Endothelial cell of umbilical vein (primary cell): ENCODE measurements at regions of chr2 and their contacts with region 1.

Region 1: GRCh38 chr2:202317080-202317857 is 51.7 kb downstream of the NOP58 start:
- DNase-seq: peak; percentile 99
- H3K4me3 ChIP-seq: peak overlapping the region in 1 of 3 experiments; percentile 14
- H3K27ac ChIP-seq: peak overlapping the region; percentile 83
- H3K4me1 ChIP-seq: peaks cover 29% of the 10 kb centered on the region
- H3K27me3 ChIP-seq: no peaks in the 10 kb centered on the region
- CTCF ChIP-seq: no peak
- POLR2A ChIP-seq: peak; percentile 36

Region 2: GRCh38 chr2:202278944-202279343 is 38.3 kb before region 1 on chr2:
- CTCF ChIA-PET with region 1: interaction called, 7 read pairs
- POLR2A ChIA-PET with region 1: no interaction called
- dilution Hi-C with region 1: no loop called
- intact Hi-C with region 1: loop called (anchors 1 kb)
- DNase-seq: peak; percentile 88
- H3K4me3 ChIP-seq: peak overlapping the region in 1 of 3 experiments; percentile 12
- H3K27ac ChIP-seq: peak overlapping the region; percentile 88
- H3K4me1 ChIP-seq: peaks cover 24% of the 10 kb centered on the region
- H3K27me3 ChIP-seq: no peaks in the 10 kb centered on the region
- CTCF ChIP-seq: peak; percentile 41 to 61
- POLR2A ChIP-seq: no peak

Region 3: GRCh38 chr2:202299712-202300111 is 17.6 kb before region 1 on chr2:
- CTCF ChIA-PET with region 1: interaction called, 9 read pairs
- POLR2A ChIA-PET with region 1: no interaction called
- dilution Hi-C with region 1: no loop called
- intact Hi-C with region 1: loop called (anchors 1 kb)
- DNase-seq: no peak
- H3K4me3 ChIP-seq: no peak overlapping the region
- H3K27ac ChIP-seq: no peak overlapping the region
- H3K4me1 ChIP-seq: peaks cover 7% of the 10 kb centered on the region
- H3K27me3 ChIP-seq: no peaks in the 10 kb centered on the region
- CTCF ChIP-seq: no peak
- POLR2A ChIP-seq: no peak

Region 4: GRCh38 chr2:202327858-202328257 is 10.6 kb after region 1 on chr2:
- CTCF ChIA-PET with region 1: interaction called, 11 read pairs
- POLR2A ChIA-PET with region 1: no interaction called
- dilution Hi-C with region 1: no loop called
- intact Hi-C with region 1: no loop called
- DNase-seq: peak; percentile 42
- H3K4me3 ChIP-seq: no peak overlapping the region
- H3K27ac ChIP-seq: no peak overlapping the region
- H3K4me1 ChIP-seq: peaks cover 9% of the 10 kb centered on the region
- H3K27me3 ChIP-seq: no peaks in the 10 kb centered on the region
- CTCF ChIP-seq: no peak
- POLR2A ChIP-seq: no peak

Region 5: DNA sequence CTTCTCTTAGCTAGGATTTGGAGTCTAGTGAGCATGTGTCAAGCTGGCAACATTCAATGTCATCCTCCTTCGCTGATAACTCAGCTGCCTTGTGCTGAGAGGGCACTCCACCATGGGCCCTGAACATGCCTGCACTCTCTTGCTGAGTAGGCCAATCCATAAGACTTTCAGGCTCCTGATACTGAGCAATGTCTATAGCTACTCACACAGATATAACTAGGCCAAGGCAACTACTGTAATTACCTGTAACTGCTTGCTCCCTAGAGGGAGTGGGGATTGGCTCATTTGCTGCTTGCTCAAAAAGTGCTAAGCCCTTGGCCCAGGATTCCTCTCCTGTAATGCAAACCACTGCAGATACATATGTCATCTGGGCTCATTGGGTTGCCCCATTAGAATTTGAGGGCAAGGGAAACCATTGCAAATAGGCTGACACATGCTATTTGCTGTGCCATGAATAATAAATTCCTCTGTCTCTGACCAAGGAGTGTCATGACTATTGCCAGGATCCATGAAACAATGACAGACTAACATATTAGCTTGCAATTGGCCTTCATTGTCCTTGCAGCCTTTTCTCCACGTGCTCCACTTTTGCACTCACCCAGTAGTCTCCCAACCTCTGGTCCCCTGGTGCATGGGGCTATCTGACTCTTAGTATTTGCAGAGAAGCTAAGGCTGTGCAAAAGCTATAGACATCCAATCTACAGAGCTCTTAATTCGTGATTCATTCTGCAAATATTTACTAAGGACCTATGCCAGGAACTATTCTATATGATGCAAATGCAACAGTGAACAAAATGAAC is 22.0 kb after region 1 on chr2:
- CTCF ChIA-PET with region 1: interaction called, 18 read pairs
- POLR2A ChIA-PET with region 1: interaction called, 4 read pairs
- dilution Hi-C with region 1: no loop called
- intact Hi-C with region 1: loop called (anchors 1 kb)
- DNase-seq: peak; percentile 80
- H3K4me3 ChIP-seq: no peak overlapping the region
- H3K27ac ChIP-seq: no peak overlapping the region
- H3K4me1 ChIP-seq: peaks cover 31% of the 10 kb centered on the region
- H3K27me3 ChIP-seq: no peaks in the 10 kb centered on the region
- CTCF ChIP-seq: no peak
- POLR2A ChIP-seq: no peak

Region 6: DNA sequence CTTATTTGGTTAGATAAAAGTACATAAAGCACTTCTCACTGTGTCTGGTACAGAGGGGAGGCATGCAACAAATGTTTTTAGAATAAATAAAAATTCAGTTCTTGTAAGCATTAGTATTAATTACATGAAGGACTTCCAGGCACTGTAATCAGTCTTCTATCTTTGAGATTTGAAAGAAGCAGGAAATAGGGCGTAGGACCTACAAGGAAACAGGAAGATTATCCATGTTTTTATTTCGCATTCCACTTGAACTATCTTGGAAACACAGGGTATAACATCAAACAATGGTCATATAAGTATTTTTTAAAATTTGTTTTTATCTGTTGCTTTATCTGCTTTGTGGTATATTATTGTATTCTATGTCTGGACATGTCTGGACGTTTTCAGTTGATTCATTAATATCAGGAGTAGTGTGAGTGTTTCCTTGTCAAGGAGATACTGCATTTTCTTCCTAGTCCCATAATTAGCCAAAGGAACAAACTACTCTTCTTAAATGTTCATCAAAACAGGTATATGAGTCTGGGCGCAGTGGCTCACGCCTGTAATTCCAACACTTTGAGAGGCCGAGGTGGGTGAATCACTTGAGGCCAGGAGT is 91.4 kb after region 1 on chr2:
- CTCF ChIA-PET with region 1: no interaction called
- POLR2A ChIA-PET with region 1: no interaction called
- dilution Hi-C with region 1: no loop called
- intact Hi-C with region 1: loop called (anchors 1 kb)
- DNase-seq: peak; percentile 87
- H3K4me3 ChIP-seq: no peak overlapping the region
- H3K27ac ChIP-seq: peak overlapping the region; percentile 80
- H3K4me1 ChIP-seq: peaks cover 68% of the 10 kb centered on the region
- H3K27me3 ChIP-seq: no peaks in the 10 kb centered on the region
- CTCF ChIP-seq: no peak
- POLR2A ChIP-seq: peak; percentile 79

Region 7: GRCh38 chr2:202479090-202479489 is 161.8 kb after region 1 on chr2:
- CTCF ChIA-PET with region 1: no interaction called
- POLR2A ChIA-PET with region 1: no interaction called
- dilution Hi-C with region 1: no loop called
- intact Hi-C with region 1: no loop called
- DNase-seq: no peak
- H3K4me3 ChIP-seq: no peak overlapping the region
- H3K27ac ChIP-seq: no peak overlapping the region
- H3K4me1 ChIP-seq: no peaks in the 10 kb centered on the region
- H3K27me3 ChIP-seq: no peaks in the 10 kb centered on the region
- CTCF ChIP-seq: no peak
- POLR2A ChIP-seq: no peak